ENCODE measurements at regions of chr1 and their contacts with region 1.

Region 1: GRCh38 chr1:94335950-94336349 is 82.2 kb upstream of the ABCD3 start:
- DNase-seq: peak; percentile 94
- H3K4me3 ChIP-seq: no peak overlapping the region
- H3K27ac ChIP-seq: no peak overlapping the region
- H3K4me1 ChIP-seq: peaks cover 5% of the 10 kb centered on the region
- H3K27me3 ChIP-seq: peaks cover 4 to 5% of the 10 kb centered on the region in 2 experiments
- CTCF ChIP-seq: peak; percentile 73 to 89
- POLR2A ChIP-seq: no peak

Region 2: DNA sequence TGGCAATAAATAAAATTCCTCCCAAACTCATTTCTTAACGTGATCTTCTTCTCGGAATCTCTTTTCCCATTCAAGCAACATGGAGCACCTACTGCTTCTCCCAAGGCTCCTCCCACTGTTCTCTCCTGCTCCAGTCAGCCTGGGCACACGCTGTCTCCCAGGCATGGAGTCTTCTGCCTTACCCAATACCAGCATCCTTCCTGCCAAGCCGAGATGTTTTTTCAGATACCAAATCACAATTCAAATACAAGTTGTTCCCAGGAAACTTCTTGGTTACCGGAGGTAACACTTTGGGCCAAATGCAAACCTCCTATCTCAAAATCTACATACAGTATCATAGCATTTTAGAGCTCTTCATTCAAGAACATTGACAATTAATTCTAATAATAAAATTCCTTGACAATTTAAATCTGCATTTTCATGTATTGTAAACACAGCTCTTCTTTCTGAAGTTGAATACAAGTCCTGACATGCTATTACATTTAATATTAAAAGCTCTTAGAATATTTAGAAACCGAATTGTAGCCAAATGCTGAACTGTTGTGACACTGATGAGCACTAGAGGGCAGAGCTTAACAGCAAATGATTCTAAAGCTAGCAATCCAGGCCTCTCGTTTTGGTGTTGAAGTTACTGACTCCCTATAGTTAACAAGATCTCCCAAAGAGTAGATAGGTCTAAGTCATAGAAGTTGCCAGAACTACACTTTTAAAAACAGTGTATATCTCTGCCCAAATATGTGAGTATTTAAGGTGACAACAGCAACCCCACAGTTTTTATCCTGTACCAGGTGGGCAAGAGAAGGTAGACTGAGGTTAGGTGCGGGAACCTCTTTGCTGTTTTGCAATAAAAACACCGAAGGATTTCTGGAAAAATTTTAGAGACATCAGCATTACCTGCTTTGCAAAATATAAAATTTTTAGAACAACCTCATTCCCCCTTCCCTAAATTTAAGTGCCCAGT is 706.6 kb before region 1 on chr1:
- CTCF ChIA-PET with region 1: interaction called, 14 read pairs
- POLR2A ChIA-PET with region 1: no interaction called
- dilution Hi-C with region 1: no loop called
- intact Hi-C with region 1: no loop called
- DNase-seq: peak; percentile 82
- H3K4me3 ChIP-seq: no peak overlapping the region
- H3K27ac ChIP-seq: peak overlapping the region; percentile 19
- H3K4me1 ChIP-seq: peaks cover 47% of the 10 kb centered on the region
- H3K27me3 ChIP-seq: no peaks in the 10 kb centered on the region
- CTCF ChIP-seq: peak; percentile 58 to 64
- POLR2A ChIP-seq: no peak

Region 3: DNA sequence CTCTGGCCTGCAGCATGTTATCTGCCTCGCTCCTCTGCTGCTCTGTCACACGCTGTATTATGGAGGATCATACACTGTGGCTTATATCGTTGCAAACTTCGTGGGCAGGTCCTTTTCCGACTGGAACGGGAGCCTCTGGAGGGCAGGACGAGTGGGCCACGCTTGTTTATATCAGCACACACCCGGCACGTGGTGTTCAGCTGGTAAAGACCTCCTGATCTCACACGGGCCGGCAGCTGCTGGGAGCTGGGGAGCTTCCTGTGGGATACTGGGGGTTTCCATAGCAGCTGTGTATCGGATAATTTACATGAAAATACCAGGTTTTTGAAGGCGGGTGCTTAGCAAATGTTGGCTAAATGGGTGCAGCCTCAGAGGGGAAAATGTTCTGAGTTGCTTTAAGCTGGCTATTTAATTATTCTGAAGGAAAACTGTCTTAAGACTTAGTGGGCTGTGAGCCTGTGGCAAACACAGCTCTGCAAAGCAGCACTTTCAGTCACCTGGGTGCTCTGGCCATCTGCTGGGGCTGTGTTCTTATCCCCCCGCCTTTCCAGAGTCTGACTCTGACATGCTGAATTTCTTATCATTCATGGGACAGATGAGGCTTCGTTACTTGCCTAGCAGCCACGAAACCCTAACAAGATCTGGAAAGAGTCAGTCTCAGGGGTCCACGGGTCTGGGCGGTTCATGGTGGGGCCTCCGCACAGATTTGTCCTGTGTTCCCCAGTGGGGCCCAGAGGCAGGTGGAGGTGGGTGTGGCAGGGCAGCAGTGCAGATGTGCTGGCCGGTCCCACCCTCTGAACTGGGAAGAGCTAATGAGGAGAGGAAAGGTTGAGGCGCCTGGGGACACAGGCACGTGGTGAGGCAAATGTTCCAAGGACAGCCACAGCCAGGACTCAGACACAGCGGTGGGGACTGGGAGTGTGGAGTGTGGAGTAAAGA is 323.0 kb before region 1 on chr1:
- CTCF ChIA-PET with region 1: interaction called, 10 read pairs
- POLR2A ChIA-PET with region 1: no interaction called
- dilution Hi-C with region 1: no loop called
- intact Hi-C with region 1: no loop called
- DNase-seq: no peak
- H3K4me3 ChIP-seq: no peak overlapping the region
- H3K27ac ChIP-seq: no peak overlapping the region
- H3K4me1 ChIP-seq: no peaks in the 10 kb centered on the region
- H3K27me3 ChIP-seq: peaks cover 5 to 11% of the 10 kb centered on the region in 2 experiments
- CTCF ChIP-seq: no peak
- POLR2A ChIP-seq: no peak

Region 4: GRCh38 chr1:94061513-94062443 is 274.2 kb before region 1 on chr1:
- CTCF ChIA-PET with region 1: interaction called, 252 read pairs
- POLR2A ChIA-PET with region 1: interaction called, 3 read pairs
- dilution Hi-C with region 1: no loop called
- intact Hi-C with region 1: loop called (anchors 1 kb)
- DNase-seq: peak; percentile 86
- H3K4me3 ChIP-seq: no peak overlapping the region
- H3K27ac ChIP-seq: peak overlapping the region; percentile 76
- H3K4me1 ChIP-seq: peaks cover 48% of the 10 kb centered on the region
- H3K27me3 ChIP-seq: no peaks in the 10 kb centered on the region
- CTCF ChIP-seq: peak; percentile 92 to 93
- POLR2A ChIP-seq: peak; percentile 36

Region 5: DNA sequence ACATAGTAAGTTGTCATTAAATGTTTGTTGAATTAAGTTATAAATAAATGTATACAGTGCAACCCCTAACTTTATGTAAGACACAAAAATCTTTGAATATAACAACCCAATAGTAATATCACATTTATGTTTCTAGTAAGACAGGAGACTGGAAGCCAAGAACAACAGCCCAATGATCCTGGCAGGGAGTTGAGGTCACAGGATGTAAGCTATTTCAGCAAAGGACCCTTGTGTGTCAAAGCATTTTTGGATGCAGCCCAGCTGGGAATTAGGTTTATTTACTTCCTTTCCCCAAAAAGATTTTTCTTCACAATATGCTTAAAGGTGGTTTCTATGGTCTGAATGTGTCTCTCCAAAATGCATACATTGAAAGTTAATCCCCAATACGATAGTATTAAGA is 181.0 kb before region 1 on chr1:
- CTCF ChIA-PET with region 1: interaction called, 12 read pairs
- POLR2A ChIA-PET with region 1: no interaction called
- dilution Hi-C with region 1: no loop called
- intact Hi-C with region 1: no loop called
- DNase-seq: peak; percentile 70
- H3K4me3 ChIP-seq: no peak overlapping the region
- H3K27ac ChIP-seq: no peak overlapping the region
- H3K4me1 ChIP-seq: peaks cover 3% of the 10 kb centered on the region
- H3K27me3 ChIP-seq: no peaks in the 10 kb centered on the region
- CTCF ChIP-seq: no peak
- POLR2A ChIP-seq: no peak

Region 6: DNA sequence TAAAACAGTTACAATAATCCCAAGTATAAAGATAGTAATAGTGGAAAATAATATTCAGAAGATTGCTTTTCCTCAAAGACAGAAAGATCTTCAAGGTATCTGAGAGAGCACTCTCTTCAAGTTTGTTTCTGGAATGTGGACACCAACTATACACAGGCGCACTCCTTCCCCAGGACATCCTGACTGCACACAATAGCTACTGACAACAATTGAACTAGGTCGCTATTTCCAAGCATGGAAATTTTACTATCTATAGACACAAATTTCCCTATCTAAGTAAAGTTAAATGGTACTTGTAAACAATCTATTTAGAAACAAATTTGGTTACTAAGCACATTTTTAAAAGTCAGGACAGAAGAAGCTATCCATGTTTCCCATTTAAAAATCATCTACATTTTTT is 117.6 kb before region 1 on chr1:
- CTCF ChIA-PET with region 1: interaction called, 14 read pairs
- POLR2A ChIA-PET with region 1: no interaction called
- dilution Hi-C with region 1: no loop called
- intact Hi-C with region 1: no loop called
- DNase-seq: peak; percentile 81
- H3K4me3 ChIP-seq: peak overlapping the region in 1 of 3 experiments; percentile 8
- H3K27ac ChIP-seq: peak overlapping the region; percentile 48
- H3K4me1 ChIP-seq: peaks cover 62% of the 10 kb centered on the region
- H3K27me3 ChIP-seq: no peaks in the 10 kb centered on the region
- CTCF ChIP-seq: no peak
- POLR2A ChIP-seq: no peak

Region 7: GRCh38 chr1:94438692-94439276 is 102.8 kb after region 1 on chr1:
- CTCF ChIA-PET with region 1: no interaction called
- POLR2A ChIA-PET with region 1: no interaction called
- dilution Hi-C with region 1: no loop called
- intact Hi-C with region 1: no loop called
- DNase-seq: no peak
- H3K4me3 ChIP-seq: no peak overlapping the region
- H3K27ac ChIP-seq: no peak overlapping the region
- H3K4me1 ChIP-seq: no peaks in the 10 kb centered on the region
- H3K27me3 ChIP-seq: no peaks in the 10 kb centered on the region
- CTCF ChIP-seq: no peak
- POLR2A ChIP-seq: no peak

Region 8: DNA sequence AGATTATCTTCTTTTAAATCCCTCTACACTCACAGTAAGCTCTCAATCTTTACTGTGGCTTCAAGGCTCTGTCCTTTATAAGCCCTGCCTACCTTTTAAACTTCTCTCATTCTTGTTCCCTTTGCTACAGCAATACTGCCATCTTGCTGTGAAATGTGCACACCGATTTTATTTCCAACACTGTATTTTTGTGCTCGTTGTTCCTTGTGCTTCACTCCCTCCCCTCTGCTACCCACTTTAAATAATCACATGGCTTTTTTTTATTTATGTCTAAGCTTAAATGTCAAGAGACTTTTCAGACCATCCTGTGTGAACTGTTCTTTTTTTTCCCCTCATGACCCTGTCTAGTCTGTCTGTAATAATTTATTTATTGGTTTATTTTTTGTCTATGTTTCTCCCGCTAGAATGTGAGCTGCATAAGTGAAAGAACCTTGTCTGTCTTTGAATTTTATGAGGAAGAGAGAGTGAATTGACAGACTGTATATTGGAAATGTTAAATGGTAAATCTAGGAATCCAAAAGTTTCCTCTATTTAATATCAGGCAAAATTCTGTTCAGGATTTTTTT is 127.9 kb after region 1 on chr1:
- CTCF ChIA-PET with region 1: interaction called, 57 read pairs
- POLR2A ChIA-PET with region 1: no interaction called
- dilution Hi-C with region 1: no loop called
- intact Hi-C with region 1: loop called (anchors 1 kb)
- DNase-seq: peak; percentile 74
- H3K4me3 ChIP-seq: no peak overlapping the region
- H3K27ac ChIP-seq: no peak overlapping the region
- H3K4me1 ChIP-seq: no peaks in the 10 kb centered on the region
- H3K27me3 ChIP-seq: no peaks in the 10 kb centered on the region
- CTCF ChIP-seq: peak in 1 of 2 donors; percentile 47
- POLR2A ChIP-seq: no peak